ENCODE measurements at regions of chr14 and their contacts with region 1.

Region 1: GRCh38 chr14:104078031-104078455 is 7.5 kb upstream of the ASPG start:
- DNase-seq: peak; percentile 71 to 87 (median 78)
- H3K4me3 ChIP-seq: no peak overlapping the region
- H3K4me3 Mint-ChIP-seq: peak overlapping the region in 5 of 7 donors; percentile 0 to 69 (median 16)
- H3K27ac ChIP-seq: no peak overlapping the region
- H3K27ac Mint-ChIP-seq: peak overlapping the region in 6 of 8 donors; percentile 0 to 92 (median 70)
- H3K4me1 ChIP-seq: peaks cover 10% of the 10 kb centered on the region
- H3K4me1 Mint-ChIP-seq: peaks cover 11 to 20% (median 17%) of the 10 kb centered on the region in 3 donors
- H3K27me3 ChIP-seq: no peaks in the 10 kb centered on the region
- H3K27me3 Mint-ChIP-seq: peaks cover 10 to 14% of the 10 kb centered on the region in 2 donors

Region 2: GRCh38 chr14:104158827-104159798 is 81.1 kb after region 1 on chr14:
- CTCF ChIA-PET with region 1: no interaction called
- POLR2A ChIA-PET with region 1: no interaction called
- DNase-seq: no peak
- H3K4me3 ChIP-seq: no peak overlapping the region
- H3K4me3 Mint-ChIP-seq: no peak overlapping the region
- H3K27ac ChIP-seq: no peak overlapping the region
- H3K27ac Mint-ChIP-seq: no peak overlapping the region
- H3K4me1 ChIP-seq: no peaks in the 10 kb centered on the region
- H3K4me1 Mint-ChIP-seq: no peaks in the 10 kb centered on the region
- H3K27me3 ChIP-seq: no peaks in the 10 kb centered on the region
- H3K27me3 Mint-ChIP-seq: no peaks in the 10 kb centered on the region

Region 3: DNA sequence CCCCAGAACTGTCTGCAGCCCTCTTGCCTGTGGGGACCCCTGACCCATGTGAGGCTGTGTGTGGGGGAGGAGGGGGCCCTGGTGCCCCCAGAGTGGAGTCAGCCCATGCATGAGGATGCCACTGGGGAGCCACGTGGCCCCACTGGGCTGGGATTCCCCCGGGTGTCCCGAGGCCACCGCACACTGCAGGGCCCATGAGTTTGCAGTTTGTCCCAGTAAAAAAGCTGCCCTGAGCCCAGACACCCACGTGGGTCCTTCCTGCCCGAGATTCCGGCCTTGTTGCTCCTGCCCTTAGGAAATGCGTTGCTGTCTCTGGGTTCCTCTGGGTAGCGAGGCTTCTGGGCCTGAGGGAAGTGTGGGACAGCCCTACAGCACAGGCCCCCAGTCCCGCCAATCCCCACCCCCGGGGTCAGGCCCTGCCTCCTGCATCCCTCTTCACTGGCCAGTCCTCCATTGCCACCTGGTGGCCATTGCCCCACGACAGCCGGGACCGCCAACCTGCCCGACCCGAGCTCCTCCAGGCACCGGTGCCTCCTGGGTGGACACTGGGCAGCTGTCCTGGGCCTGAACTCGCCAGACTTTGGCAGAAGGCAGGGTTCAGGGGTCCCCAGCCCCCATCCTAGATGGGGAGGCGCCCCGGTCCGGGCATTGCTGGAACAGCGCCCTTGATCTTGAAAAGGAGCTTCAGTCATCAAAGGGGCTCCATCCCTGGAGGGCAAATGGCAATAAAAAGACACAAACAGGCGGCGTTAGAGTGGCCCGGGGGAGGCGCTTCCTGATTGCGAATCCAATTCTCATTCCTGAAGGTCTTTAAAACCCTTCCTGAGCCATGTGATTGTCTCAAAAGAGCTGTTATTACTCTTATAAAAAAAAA is 485.9 kb after region 1 on chr14:
- CTCF ChIA-PET with region 1: interaction called, 10 read pairs
- POLR2A ChIA-PET with region 1: no interaction called
- DNase-seq: peak; percentile 42 to 68 (median 54)
- H3K4me3 ChIP-seq: no peak overlapping the region
- H3K4me3 Mint-ChIP-seq: no peak overlapping the region
- H3K27ac ChIP-seq: no peak overlapping the region
- H3K27ac Mint-ChIP-seq: no peak overlapping the region
- H3K4me1 ChIP-seq: peaks cover 6% of the 10 kb centered on the region
- H3K4me1 Mint-ChIP-seq: peaks cover 0 to 4% (median 0%) of the 10 kb centered on the region in 3 donors
- H3K27me3 ChIP-seq: no peaks in the 10 kb centered on the region
- H3K27me3 Mint-ChIP-seq: peaks cover 10 to 30% of the 10 kb centered on the region in 2 donors